Activated B cell treated with CpG ODN at 0.5 μM for 24 hours (primary cell): ENCODE measurements at regions of chr4 and their contacts with region 1.

Region 1: DNA sequence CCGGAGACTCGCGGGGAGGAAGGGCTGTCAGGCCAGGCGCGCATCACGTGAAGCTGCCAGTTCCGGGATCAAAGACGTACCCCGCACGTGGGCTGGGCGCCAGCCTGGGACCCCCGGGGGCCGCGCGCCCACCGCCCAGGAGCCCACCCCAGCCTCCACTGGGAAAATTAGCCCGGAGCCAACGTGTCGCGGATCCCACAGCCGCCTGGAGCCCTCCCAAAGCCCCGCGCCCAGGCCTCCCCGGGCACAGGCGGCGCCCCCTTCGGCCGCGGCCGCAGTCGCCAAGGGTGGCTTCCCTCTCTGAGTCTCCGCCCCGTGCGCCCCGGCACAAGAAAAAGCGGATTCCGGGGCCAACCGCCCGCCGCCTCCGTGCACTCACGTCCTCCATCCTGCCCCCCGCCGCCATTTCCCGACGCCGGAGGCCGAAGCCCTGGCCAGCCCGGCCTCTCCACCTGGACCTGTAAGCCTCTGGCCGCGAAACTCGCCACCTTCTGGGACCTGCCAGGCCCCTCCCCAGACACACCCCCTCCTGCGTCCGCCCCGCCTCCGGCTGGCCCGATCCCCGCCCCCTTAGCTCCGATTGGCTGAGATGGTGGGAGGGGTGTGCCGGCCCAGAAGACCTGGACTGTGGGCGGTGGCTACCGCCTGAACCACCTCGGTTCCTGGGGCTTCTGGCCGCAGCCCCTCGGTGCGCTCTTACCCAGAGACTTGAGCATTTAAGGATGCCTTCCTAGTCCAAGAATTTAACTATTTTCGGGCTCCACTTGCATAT is at the start of gene TMEM192:
- DNase-seq: peak; percentile 96
- ATAC-seq: peak; percentile 96
- H3K4me3 Mint-ChIP-seq: peak within 1 kb of the TSS; percentile 97
- H3K27ac Mint-ChIP-seq: peak within 1 kb of the TSS; percentile 96
- H3K4me1 Mint-ChIP-seq: peaks cover 24% of the 10 kb centered on the region
- H3K27me3 Mint-ChIP-seq: peaks cover 3% of the 10 kb centered on the region
- CTCF ChIP-seq: peak; percentile 15
- total RNA-seq, gene TMEM192: 17.0 and 19.3 TPM in 2 replicates

Region 2: DNA sequence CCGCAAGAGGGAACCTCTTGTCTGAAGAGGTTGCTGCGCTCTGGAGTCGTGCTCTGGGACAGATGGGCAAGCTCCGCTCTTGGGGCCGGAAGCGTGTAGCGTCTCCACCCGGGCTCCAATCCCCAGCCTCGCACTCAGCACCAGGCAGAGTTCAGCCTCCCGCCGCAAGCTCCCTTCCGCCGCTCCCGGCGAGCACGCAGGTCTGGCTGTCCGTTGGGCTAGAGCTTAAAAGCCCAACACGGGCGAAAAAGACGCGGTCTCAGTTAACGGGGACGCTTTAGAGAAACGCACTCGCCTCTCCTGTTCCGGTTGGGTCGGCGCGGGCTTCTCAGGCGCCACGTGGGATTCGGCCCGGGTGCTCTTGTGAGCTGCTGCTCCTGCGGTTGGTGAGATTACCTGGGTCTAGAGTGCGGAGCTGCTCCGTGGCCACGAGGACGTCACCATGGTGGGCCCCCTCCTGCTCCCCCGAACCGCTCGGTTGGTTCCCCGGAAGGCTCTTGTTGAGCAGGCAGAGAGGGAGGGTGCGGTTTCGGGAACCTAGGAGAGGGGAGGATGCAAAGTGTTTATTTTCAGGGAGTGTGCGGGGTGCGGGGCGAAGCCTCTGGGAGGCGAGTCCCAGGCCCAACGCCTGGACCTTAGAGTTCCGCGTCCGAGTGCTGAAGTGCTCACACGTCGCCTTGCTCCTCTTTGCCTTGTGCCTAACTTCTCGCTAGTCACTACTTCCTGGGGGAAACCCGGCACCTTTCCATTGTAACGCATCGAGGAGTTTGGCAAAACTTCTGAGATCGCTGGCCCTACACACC is 1618.0 kb before region 1 on chr4 and contains the start of gene TMA16:
- CTCF ChIA-PET with region 1: no interaction called
- POLR2A ChIA-PET with region 1: interaction called, 10 read pairs
- intact Hi-C with region 1: loop called (anchors 2 kb)
- DNase-seq: peak; percentile 75
- ATAC-seq: peak; percentile 66
- H3K4me3 Mint-ChIP-seq: peak within 1 kb of the TSS; percentile 99
- H3K27ac Mint-ChIP-seq: peak within 1 kb of the TSS; percentile 99
- H3K4me1 Mint-ChIP-seq: peaks cover 43% of the 10 kb centered on the region
- H3K27me3 Mint-ChIP-seq: no peaks in the 10 kb centered on the region
- CTCF ChIP-seq: no peak
- total RNA-seq, gene TMA16: 52.5 and 54.1 TPM in 2 replicates

Region 3: GRCh38 chr4:163663454-163664225 is 1448.9 kb before region 1 on chr4:
- CTCF ChIA-PET with region 1: no interaction called
- POLR2A ChIA-PET with region 1: no interaction called
- intact Hi-C with region 1: loop called (anchors 10 kb)
- DNase-seq: no peak
- ATAC-seq: peak; percentile 70
- H3K4me3 Mint-ChIP-seq: peak overlapping the region; percentile 62
- H3K27ac Mint-ChIP-seq: peak overlapping the region; percentile 97
- H3K4me1 Mint-ChIP-seq: peaks cover 80% of the 10 kb centered on the region
- H3K27me3 Mint-ChIP-seq: no peaks in the 10 kb centered on the region
- CTCF ChIP-seq: no peak

Region 4: DNA sequence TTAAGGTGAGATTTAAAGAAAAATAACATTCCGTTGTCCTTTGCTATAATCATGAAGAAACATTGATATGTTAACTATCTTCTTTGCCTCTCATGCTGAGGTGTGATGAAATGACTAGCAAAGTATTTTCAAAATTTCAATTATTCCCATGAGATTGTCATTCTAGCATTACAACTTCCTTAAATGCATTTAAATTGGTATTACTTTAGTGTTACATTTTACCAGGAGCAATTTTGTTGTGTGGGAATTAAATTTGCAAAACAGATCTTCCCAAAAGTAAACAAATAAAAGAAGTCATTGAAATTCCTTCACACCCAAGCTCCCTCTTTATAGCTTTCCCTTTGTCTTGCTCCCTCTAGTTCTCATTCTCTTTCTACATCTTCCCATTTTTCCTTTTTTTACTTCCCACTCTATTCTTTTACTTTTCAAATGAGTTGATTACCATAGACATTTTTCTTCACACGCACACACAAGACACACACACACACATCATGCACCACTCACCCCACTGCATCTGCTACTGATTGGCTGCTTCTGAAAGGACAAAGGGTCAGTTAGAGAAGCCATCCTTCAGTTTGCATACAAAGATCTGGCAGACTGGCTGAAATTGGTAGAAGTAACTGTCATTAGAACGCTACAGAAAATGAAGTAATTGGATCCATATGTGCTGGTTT is 245.6 kb before region 1 on chr4:
- CTCF ChIA-PET with region 1: no interaction called
- POLR2A ChIA-PET with region 1: no interaction called
- intact Hi-C with region 1: no loop called
- DNase-seq: no peak
- ATAC-seq: no peak
- H3K4me3 Mint-ChIP-seq: no peak overlapping the region
- H3K27ac Mint-ChIP-seq: no peak overlapping the region
- H3K4me1 Mint-ChIP-seq: no peaks in the 10 kb centered on the region
- H3K27me3 Mint-ChIP-seq: peaks cover 3% of the 10 kb centered on the region
- CTCF ChIP-seq: no peak

Region 5: GRCh38 chr4:164977243-164978164 is 135.1 kb before region 1 on chr4 and contains the start of gene TRIM61:
- CTCF ChIA-PET with region 1: no interaction called
- POLR2A ChIA-PET with region 1: interaction called, 3 read pairs
- intact Hi-C with region 1: loop called (anchors 1 kb)
- DNase-seq: peak; percentile 37
- ATAC-seq: peak; percentile 94
- H3K4me3 Mint-ChIP-seq: peak within 1 kb of the TSS; percentile 91
- H3K27ac Mint-ChIP-seq: peak within 1 kb of the TSS; percentile 80
- H3K4me1 Mint-ChIP-seq: peaks cover 23% of the 10 kb centered on the region
- H3K27me3 Mint-ChIP-seq: no peaks in the 10 kb centered on the region
- CTCF ChIP-seq: no peak
- total RNA-seq, gene TRIM61: 2.1 and 3.6 TPM in 2 replicates

Region 6: GRCh38 chr4:165131247-165131832 is 18.8 kb after region 1 on chr4:
- CTCF ChIA-PET with region 1: interaction called, 24 read pairs
- POLR2A ChIA-PET with region 1: interaction called, 6 read pairs
- intact Hi-C with region 1: loop called (anchors 1 kb)
- DNase-seq: peak; percentile 51
- ATAC-seq: peak; percentile 85
- H3K4me3 Mint-ChIP-seq: no peak overlapping the region
- H3K27ac Mint-ChIP-seq: no peak overlapping the region
- H3K4me1 Mint-ChIP-seq: peaks cover 40% of the 10 kb centered on the region
- H3K27me3 Mint-ChIP-seq: no peaks in the 10 kb centered on the region
- CTCF ChIP-seq: peak; percentile 77

Region 7: GRCh38 chr4:165327211-165328100 is 214.9 kb after region 1 on chr4 and contains the start of gene MSMO1:
- CTCF ChIA-PET with region 1: interaction called, 10 read pairs
- POLR2A ChIA-PET with region 1: interaction called, 14 read pairs
- intact Hi-C with region 1: loop called (anchors 1 kb)
- DNase-seq: peak; percentile 92
- ATAC-seq: peak; percentile 96
- H3K4me3 Mint-ChIP-seq: no peak within 1 kb of the TSS
- H3K27ac Mint-ChIP-seq: no peak within 1 kb of the TSS
- H3K4me1 Mint-ChIP-seq: peaks cover 40% of the 10 kb centered on the region
- H3K27me3 Mint-ChIP-seq: no peaks in the 10 kb centered on the region
- CTCF ChIP-seq: no peak
- total RNA-seq, gene MSMO1: 74.6 and 87.9 TPM in 2 replicates

Region 8: GRCh38 chr4:165464813-165465381 is 352.3 kb after region 1 on chr4:
- CTCF ChIA-PET with region 1: interaction called, 4 read pairs
- POLR2A ChIA-PET with region 1: no interaction called
- intact Hi-C with region 1: loop called (anchors 5 kb)
- DNase-seq: no peak
- ATAC-seq: peak; percentile 45
- H3K4me3 Mint-ChIP-seq: no peak overlapping the region
- H3K27ac Mint-ChIP-seq: no peak overlapping the region
- H3K4me1 Mint-ChIP-seq: no peaks in the 10 kb centered on the region
- H3K27me3 Mint-ChIP-seq: peaks cover 4% of the 10 kb centered on the region
- CTCF ChIP-seq: peak; percentile 80